GM12878 (cell line): ENCODE measurements at regions of chr7 and their contacts with region 1.

Region 1: DNA sequence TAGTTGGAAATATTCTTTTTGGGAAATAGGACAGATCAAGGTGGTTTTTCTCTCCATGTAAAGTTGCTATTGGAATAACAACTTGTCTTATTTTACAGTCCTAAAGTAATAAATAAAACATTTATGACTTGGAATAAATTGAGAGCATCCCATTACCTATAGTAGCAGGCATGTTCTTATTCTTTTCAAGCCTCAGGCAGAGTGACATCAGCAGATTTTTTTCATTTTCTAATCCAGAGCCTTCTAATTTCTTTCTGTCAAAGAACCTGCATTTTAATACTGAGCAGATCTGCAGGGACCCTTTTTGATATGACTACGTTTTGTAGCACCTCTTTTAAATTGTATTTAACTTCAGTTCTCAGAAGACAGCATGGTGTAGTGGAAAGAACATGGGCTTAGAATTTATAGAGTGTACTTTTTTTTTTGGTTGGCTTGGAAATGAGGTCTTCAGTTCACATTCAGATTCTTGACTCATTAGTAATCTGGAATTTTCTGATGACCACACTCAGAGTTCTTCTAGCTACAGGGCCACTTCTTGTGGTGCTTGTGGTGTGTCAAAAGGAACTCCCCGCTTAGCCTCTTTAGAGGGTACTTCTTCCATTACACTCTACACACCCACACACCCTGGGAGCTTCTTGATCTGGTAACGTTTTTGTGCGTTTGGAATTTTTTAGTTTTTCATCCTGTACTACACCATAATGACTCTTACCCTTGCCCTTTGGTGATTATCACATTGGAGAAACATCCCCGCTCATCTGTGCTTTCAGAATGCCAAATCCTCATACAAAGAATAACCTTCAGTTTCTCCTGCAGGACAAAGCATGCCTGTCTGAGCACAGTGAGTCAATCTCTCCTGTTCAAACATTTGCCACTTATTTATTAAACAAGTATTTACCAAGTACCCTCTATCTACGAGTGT is 34.6 kb downstream of the AGK start:
- DNase-seq: peak; percentile 46
- ATAC-seq: peak; percentile 96
- H3K4me3 ChIP-seq: no peak overlapping the region
- H3K27ac ChIP-seq: peak overlapping the region; percentile 64
- H3K4me1 ChIP-seq: no peaks in the 10 kb centered on the region
- H3K27me3 ChIP-seq: no peaks in the 10 kb centered on the region
- CTCF ChIP-seq: no peak
- EP300 ChIP-seq: peak; percentile 43 to 46; a peak in 2 of 4 replicates
- POLR2A ChIP-seq: no peak
- RAD21 ChIP-seq: no peak

Region 2: GRCh38 chr7:141533149-141533949 is 52.5 kb before region 1 on chr7:
- CTCF ChIA-PET with region 1: no interaction called
- POLR2A ChIA-PET with region 1: no interaction called
- RAD21 ChIA-PET with region 1: no interaction called
- SMC1A ChIA-PET with region 1: no interaction called
- in situ Hi-C with region 1: no loop called
- intact Hi-C with region 1: no loop called
- DNase-seq: no peak
- ATAC-seq: peak; percentile 89
- H3K4me3 ChIP-seq: no peak overlapping the region
- H3K27ac ChIP-seq: no peak overlapping the region
- H3K4me1 ChIP-seq: no peaks in the 10 kb centered on the region
- H3K27me3 ChIP-seq: no peaks in the 10 kb centered on the region
- CTCF ChIP-seq: peak; percentile 88 to 97 (median 95)
- EP300 ChIP-seq: no peak
- POLR2A ChIP-seq: no peak
- RAD21 ChIP-seq: peak; percentile 90

Region 3: GRCh38 chr7:141551094-141551781 is 34.6 kb before region 1 on chr7 and contains the start of gene AGK:
- CTCF ChIA-PET with region 1: no interaction called
- POLR2A ChIA-PET with region 1: no interaction called
- RAD21 ChIA-PET with region 1: no interaction called
- SMC1A ChIA-PET with region 1: no interaction called
- in situ Hi-C with region 1: no loop called
- intact Hi-C with region 1: loop called (anchors 5 kb)
- DNase-seq: no peak
- ATAC-seq: peak; percentile 96
- H3K4me3 ChIP-seq: peak within 1 kb of the TSS; percentile 84
- H3K27ac ChIP-seq: peak within 1 kb of the TSS; percentile 84
- H3K4me1 ChIP-seq: peaks cover 8% of the 10 kb centered on the region
- H3K27me3 ChIP-seq: no peaks in the 10 kb centered on the region
- CTCF ChIP-seq: no peak
- EP300 ChIP-seq: no peak
- POLR2A ChIP-seq: peak; percentile 97
- RAD21 ChIP-seq: no peak
- polyA plus RNA-seq, gene AGK: 32.5 to 34.1 TPM

Region 4: GRCh38 chr7:141975806-141976523 is 390.1 kb after region 1 on chr7:
- CTCF ChIA-PET with region 1: no interaction called
- POLR2A ChIA-PET with region 1: no interaction called
- RAD21 ChIA-PET with region 1: no interaction called
- SMC1A ChIA-PET with region 1: no interaction called
- in situ Hi-C with region 1: no loop called
- intact Hi-C with region 1: no loop called
- DNase-seq: peak; percentile 7
- ATAC-seq: peak; percentile 93
- H3K4me3 ChIP-seq: 0 out of 2 replicates have a peak overlapping the region, but pooled peaks have one; percentile 36
- H3K27ac ChIP-seq: no peak overlapping the region
- H3K4me1 ChIP-seq: no peaks in the 10 kb centered on the region
- H3K27me3 ChIP-seq: no peaks in the 10 kb centered on the region
- CTCF ChIP-seq: peak; percentile 81 to 92 (median 88)
- EP300 ChIP-seq: no peak
- POLR2A ChIP-seq: 0 out of 2 replicates have a peak, but pooled peaks have one; percentile 30
- RAD21 ChIP-seq: peak; percentile 82